ENCODE measurements at regions of chr12 and their contacts with region 1.

Region 1: GRCh38 chr12:122871851-122872780 is 23.8 kb downstream of the VPS37B start:
- DNase-seq: no peak
- H3K4me3 Mint-ChIP-seq: peak overlapping the region; percentile 59
- H3K27ac Mint-ChIP-seq: peak overlapping the region; percentile 69
- H3K4me1 Mint-ChIP-seq: peaks cover 49% of the 10 kb centered on the region
- H3K27me3 Mint-ChIP-seq: peaks cover 16% of the 10 kb centered on the region

Region 2: DNA sequence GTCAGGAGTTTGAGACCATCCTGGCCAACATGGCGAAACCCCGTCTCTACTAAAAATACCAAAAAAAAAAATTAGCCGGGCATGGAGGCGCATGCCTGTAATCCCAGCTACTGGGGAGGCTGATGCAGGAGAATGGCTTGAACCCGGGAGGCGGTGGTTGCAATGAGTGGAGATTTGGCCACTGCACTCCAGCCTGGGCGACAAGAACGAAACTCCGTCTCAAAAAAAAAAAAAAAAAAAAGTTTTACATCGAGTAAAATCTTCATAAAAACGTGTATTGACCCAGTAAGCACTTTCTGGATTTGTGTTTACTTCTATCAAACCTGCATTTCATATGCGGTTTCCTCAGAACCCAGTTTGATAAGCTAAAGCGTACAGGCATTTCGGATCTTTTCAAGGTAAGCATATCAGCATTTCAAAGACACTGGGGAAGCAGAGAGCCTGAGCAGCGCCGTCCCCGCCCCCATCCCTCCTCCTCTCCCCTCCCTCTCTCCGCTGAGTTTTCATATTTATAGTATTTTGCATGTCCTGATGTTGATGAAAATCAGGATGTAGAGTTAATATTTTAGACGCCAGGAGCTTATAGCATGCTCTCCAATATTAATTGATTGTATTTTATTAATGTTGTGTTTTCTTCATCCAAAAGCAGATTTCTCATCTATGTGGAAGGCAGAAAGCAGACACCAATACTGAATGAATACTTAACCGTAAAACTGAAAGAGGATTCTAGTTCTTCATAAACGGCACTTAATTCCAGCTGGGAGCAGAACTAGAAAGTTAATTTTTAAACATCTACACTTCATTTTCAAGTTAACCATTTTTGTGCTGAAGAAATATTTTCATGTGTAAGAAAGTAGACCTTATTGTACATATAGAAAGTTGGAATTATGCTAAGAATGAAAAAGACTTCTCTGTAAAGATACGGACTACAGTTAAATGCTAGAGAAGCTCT is 46.1 kb before region 1 on chr12:
- intact Hi-C with region 1: no loop called
- DNase-seq: no peak
- H3K4me3 Mint-ChIP-seq: peak overlapping the region; percentile 8
- H3K27ac Mint-ChIP-seq: no peak overlapping the region
- H3K4me1 Mint-ChIP-seq: peaks cover 2% of the 10 kb centered on the region
- H3K27me3 Mint-ChIP-seq: peaks cover 25% of the 10 kb centered on the region

Region 3: DNA sequence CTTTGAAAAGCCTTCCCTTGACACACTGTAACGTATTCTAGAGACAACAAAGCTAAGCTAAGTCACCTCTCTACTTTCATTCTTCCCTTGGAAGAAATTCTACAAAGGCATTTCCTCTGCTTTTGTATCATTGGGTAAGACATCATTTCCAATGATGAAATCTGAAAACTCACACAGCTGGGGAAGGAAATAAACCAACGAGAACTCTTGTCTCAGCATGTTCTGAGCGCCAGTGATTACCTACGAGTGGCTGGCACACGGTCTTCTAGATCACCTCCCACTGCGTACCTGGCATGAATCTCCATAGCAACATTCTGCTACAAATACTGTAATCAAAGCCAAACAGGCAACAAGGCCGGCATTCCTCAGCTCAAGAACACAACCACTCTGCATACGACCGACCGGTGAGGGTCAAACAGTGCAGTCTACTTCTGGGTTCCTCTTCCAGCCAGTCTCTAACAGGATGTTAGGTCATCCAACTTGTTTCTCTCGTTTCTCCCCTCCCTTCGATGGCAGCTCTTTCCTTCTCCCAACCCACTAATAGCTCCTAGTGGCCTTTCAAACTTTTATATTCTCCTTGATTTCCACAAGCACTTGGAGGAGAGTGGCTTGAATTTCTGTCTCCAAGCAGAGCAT is 16.2 kb after region 1 on chr12:
- intact Hi-C with region 1: loop called (anchors 1 kb)
- DNase-seq: no peak
- H3K4me3 Mint-ChIP-seq: peak overlapping the region; percentile 71
- H3K27ac Mint-ChIP-seq: peak overlapping the region; percentile 84
- H3K4me1 Mint-ChIP-seq: peaks cover 51% of the 10 kb centered on the region
- H3K27me3 Mint-ChIP-seq: peaks cover 19% of the 10 kb centered on the region

Region 4: GRCh38 chr12:122946690-122947341 is 74.7 kb after region 1 on chr12:
- intact Hi-C with region 1: loop called (anchors 1 kb)
- DNase-seq: peak; percentile 75
- H3K4me3 Mint-ChIP-seq: peak overlapping the region; percentile 61
- H3K27ac Mint-ChIP-seq: peak overlapping the region; percentile 83
- H3K4me1 Mint-ChIP-seq: peaks cover 26% of the 10 kb centered on the region
- H3K27me3 Mint-ChIP-seq: no peaks in the 10 kb centered on the region

Measured in activated T-helper 2 cell treated with anti-CD3 and anti-CD28 coated beads, Interferon-gamma antibody, Interleukin-2, Interleukin-4, amounts not matched to agents 10 μg/mL and 5 μg/mL and 100 μg/mL, durations not matched to agents 14 hours and 24 hours and 36 hours (primary cell).